ENCODE measurements at regions of chr4 and their contacts with region 1.

Region 1: GRCh38 chr4:87848622-87849351 is 16.0 kb downstream of the MEPE start:
- DNase-seq: peak in 1 of 3 donors; percentile 59
- ATAC-seq: peak; percentile 85 to 88
- H3K4me3 ChIP-seq: peak overlapping the region; percentile 33
- H3K27ac ChIP-seq: no peak overlapping the region
- H3K4me1 ChIP-seq: no peaks in the 10 kb centered on the region
- H3K27me3 ChIP-seq: no peaks in the 10 kb centered on the region

Region 2: GRCh38 chr4:87375719-87376291 is 473.0 kb before region 1 on chr4:
- intact Hi-C with region 1: loop called in 2 of 4 experiments (anchors 10 kb)
- DNase-seq: peak in 2 of 3 donors; percentile 30 to 72
- ATAC-seq: peak; percentile 78 to 84
- H3K4me3 ChIP-seq: no peak overlapping the region
- H3K27ac ChIP-seq: no peak overlapping the region
- H3K4me1 ChIP-seq: no peaks in the 10 kb centered on the region
- H3K27me3 ChIP-seq: no peaks in the 10 kb centered on the region

Region 3: GRCh38 chr4:87543835-87544461 is 304.8 kb before region 1 on chr4:
- intact Hi-C with region 1: loop called in 2 of 4 experiments (anchors 5 to 10 kb)
- DNase-seq: peak in 1 of 3 donors; percentile 50
- ATAC-seq: peak; percentile 67 to 75
- H3K4me3 ChIP-seq: no peak overlapping the region
- H3K27ac ChIP-seq: no peak overlapping the region
- H3K4me1 ChIP-seq: peaks cover 3% of the 10 kb centered on the region
- H3K27me3 ChIP-seq: no peaks in the 10 kb centered on the region

Region 4: DNA sequence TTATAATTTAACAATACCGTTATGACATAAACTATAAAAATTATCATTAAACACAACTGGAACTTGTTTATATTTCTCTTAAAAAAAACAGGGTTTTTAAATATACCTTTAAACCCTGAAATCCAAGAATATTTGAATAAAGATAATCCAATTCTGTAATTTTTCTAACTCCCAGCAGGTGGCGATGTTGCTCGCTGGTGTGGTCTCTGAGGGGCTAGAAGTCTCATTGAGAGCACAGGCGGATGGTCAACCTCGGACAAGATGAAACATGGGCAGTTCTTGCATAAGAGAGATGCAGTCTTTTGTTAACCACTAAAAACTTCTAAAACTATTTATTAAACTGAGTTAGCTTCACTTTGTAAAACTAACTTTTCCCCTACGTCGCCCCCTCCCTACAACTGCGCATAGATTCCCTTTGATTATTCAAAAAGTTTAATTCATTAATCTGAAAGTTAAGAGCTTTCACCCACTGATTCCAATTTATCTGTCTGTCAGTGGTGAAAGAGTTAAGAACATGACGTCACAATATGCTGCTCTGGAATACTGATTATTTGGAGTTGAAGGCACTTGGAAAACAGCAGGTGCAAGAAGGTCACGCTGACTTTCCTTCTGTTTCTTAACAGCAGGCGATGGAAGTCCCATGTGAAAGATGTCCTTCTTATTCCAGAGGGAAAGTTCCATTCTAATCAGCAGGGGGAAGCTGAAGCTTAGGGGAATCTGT is 169.2 kb before region 1 on chr4:
- intact Hi-C with region 1: loop called (anchors 2 to 10 kb)
- DNase-seq: peak; percentile 61 to 71 (median 65)
- ATAC-seq: peak; percentile 71 to 84
- H3K4me3 ChIP-seq: no peak overlapping the region
- H3K27ac ChIP-seq: no peak overlapping the region
- H3K4me1 ChIP-seq: no peaks in the 10 kb centered on the region
- H3K27me3 ChIP-seq: no peaks in the 10 kb centered on the region

Region 5: DNA sequence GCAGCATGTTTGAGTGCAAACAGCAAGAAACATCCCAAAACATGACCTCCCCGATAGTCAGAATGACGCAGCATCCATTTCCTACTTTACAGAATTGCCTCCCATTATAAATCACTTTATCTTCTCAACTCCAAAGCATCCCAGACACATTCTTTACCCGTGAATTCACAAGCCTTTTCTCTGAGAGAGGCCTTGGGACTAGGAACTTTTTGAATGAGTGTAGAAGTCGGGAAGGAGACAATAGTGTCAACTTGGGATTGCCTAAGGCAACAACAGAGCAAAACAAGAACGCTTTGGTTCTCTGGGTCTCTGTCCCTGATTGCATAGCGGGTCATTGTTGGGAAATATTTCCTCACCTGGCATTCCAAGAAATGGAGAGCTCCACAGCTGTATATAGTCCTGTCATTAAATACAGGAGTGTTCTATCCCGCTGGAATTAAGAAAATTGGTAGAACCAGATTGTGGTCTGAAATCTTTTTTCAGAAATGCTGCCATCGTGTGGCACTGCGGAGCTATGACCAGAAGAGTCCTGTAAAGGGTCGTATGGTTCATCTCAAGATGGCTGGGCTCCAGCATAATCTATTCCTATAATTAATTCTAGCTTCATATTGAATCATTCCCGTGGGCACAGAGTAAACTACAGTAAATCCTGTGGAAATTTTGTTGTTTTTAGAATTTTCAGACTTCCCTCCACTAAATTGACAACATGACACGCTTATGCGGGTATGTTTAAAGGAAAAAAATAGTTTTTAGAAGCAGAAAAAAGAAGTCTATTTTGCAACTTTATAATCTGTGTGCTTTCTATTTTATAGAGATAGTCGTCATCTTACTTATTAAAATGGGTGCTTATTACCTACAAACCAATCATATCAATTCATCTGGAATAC is 124.7 kb after region 1 on chr4:
- intact Hi-C with region 1: loop called in 2 of 4 experiments (anchors 2 kb)
- DNase-seq: peak; percentile 37 to 73 (median 59)
- ATAC-seq: peak; percentile 57 to 74
- H3K4me3 ChIP-seq: no peak overlapping the region
- H3K27ac ChIP-seq: no peak overlapping the region
- H3K4me1 ChIP-seq: no peaks in the 10 kb centered on the region
- H3K27me3 ChIP-seq: no peaks in the 10 kb centered on the region

Region 6: DNA sequence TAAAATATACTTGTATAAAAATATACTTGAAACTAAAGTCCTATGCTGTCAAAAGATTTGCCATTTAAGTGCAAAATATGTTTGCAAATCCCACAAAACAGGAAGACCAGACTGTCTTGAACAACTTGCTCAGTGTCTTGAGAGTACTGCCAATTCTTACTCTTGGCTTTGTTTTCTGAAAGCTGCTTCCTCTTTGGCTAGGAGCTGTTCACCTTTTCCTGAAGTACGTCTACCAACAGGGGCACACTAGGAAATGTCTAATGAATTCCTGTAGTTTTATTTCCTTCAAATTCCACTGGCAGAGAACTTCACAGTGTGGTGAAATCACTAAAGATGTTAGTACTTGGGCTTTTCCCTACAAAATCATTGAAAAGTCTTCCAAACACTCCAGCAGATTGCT is 356.1 kb after region 1 on chr4:
- intact Hi-C with region 1: loop called in 3 of 4 experiments (anchors 5 to 10 kb)
- DNase-seq: no peak
- ATAC-seq: peak; percentile 32 to 36
- H3K4me3 ChIP-seq: no peak overlapping the region
- H3K27ac ChIP-seq: no peak overlapping the region
- H3K4me1 ChIP-seq: no peaks in the 10 kb centered on the region
- H3K27me3 ChIP-seq: no peaks in the 10 kb centered on the region

Region 7: GRCh38 chr4:88211473-88212252 is 362.9 kb after region 1 on chr4:
- intact Hi-C with region 1: loop called in 3 of 4 experiments (anchors 5 to 10 kb)
- DNase-seq: no peak
- ATAC-seq: peak in 1 of 2 donors; percentile 49
- H3K4me3 ChIP-seq: no peak overlapping the region
- H3K27ac ChIP-seq: no peak overlapping the region
- H3K4me1 ChIP-seq: no peaks in the 10 kb centered on the region
- H3K27me3 ChIP-seq: no peaks in the 10 kb centered on the region

Measured in right cardiac atrium (tissue), 5 donors.